CD8-positive, alpha-beta T cell (primary cell): ENCODE measurements at regions of chr7 and their contacts with region 1.

Region 1: GRCh38 chr7:104207731-104208420 is at the start of gene ORC5:
- DNase-seq: peak; percentile 41 to 90 (median 73)
- ATAC-seq: peak; percentile 95
- H3K4me3 ChIP-seq: peak within 1 kb of the TSS; percentile 85 to 87
- H3K4me3 Mint-ChIP-seq: peak within 1 kb of the TSS; percentile 92
- H3K27ac ChIP-seq: peak within 1 kb of the TSS; percentile 75 to 91
- H3K27ac Mint-ChIP-seq: peak within 1 kb of the TSS; percentile 95
- H3K4me1 ChIP-seq: peaks cover 17% of the 10 kb centered on the region
- H3K4me1 Mint-ChIP-seq: peaks cover 49% of the 10 kb centered on the region
- H3K27me3 ChIP-seq: no peaks in the 10 kb centered on the region
- H3K27me3 Mint-ChIP-seq: peaks cover 15% of the 10 kb centered on the region
- CTCF ChIP-seq: no peak
- total RNA-seq, gene ORC5: 9.7 to 11.3 TPM

Region 2: GRCh38 chr7:105003275-105003674 is 795.4 kb after region 1 on chr7:
- CTCF ChIA-PET with region 1: no interaction called
- POLR2A ChIA-PET with region 1: no interaction called
- intact Hi-C with region 1: loop called in 1 of 2 experiments (anchors 10 kb)
- DNase-seq: peak in 4 of 9 experiments; percentile 49 to 63 (median 54)
- ATAC-seq: peak; percentile 84
- H3K4me3 ChIP-seq: no peak overlapping the region
- H3K4me3 Mint-ChIP-seq: peak overlapping the region; percentile 71
- H3K27ac ChIP-seq: peak overlapping the region in 1 of 2 experiments; percentile 65
- H3K27ac Mint-ChIP-seq: peak overlapping the region; percentile 91
- H3K4me1 ChIP-seq: peaks cover 79% of the 10 kb centered on the region
- H3K4me1 Mint-ChIP-seq: peaks cover 85% of the 10 kb centered on the region
- H3K27me3 ChIP-seq: no peaks in the 10 kb centered on the region
- H3K27me3 Mint-ChIP-seq: no peaks in the 10 kb centered on the region
- CTCF ChIP-seq: no peak

Region 3: GRCh38 chr7:105024743-105025142 is 816.9 kb after region 1 on chr7:
- CTCF ChIA-PET with region 1: no interaction called
- POLR2A ChIA-PET with region 1: no interaction called
- intact Hi-C with region 1: no loop called
- DNase-seq: no peak
- ATAC-seq: no peak
- H3K4me3 ChIP-seq: no peak overlapping the region
- H3K4me3 Mint-ChIP-seq: peak overlapping the region; percentile 44
- H3K27ac ChIP-seq: no peak overlapping the region
- H3K27ac Mint-ChIP-seq: no peak overlapping the region
- H3K4me1 ChIP-seq: peaks cover 87% of the 10 kb centered on the region
- H3K4me1 Mint-ChIP-seq: peaks cover 91% of the 10 kb centered on the region
- H3K27me3 ChIP-seq: no peaks in the 10 kb centered on the region
- H3K27me3 Mint-ChIP-seq: no peaks in the 10 kb centered on the region
- CTCF ChIP-seq: no peak